ENCODE measurements at regions of chr6 and their contacts with region 1.

Region 1: GRCh38 chr6:81003156-81003555 is 749.3 kb downstream of the TENT5A start:
- DNase-seq: peak; percentile 10
- ATAC-seq: peak; percentile 51
- H3K4me3 ChIP-seq: no peak overlapping the region
- H3K27ac ChIP-seq: no peak overlapping the region
- H3K4me1 ChIP-seq: no peaks in the 10 kb centered on the region
- H3K27me3 ChIP-seq: no peaks in the 10 kb centered on the region
- CTCF ChIP-seq: no peak

Region 2: GRCh38 chr6:80742481-80742880 is 260.7 kb before region 1 on chr6:
- CTCF ChIA-PET with region 1: no interaction called
- POLR2A ChIA-PET with region 1: no interaction called
- intact Hi-C with region 1: no loop called
- DNase-seq: peak; percentile 45
- ATAC-seq: peak; percentile 49
- H3K4me3 ChIP-seq: no peak overlapping the region
- H3K27ac ChIP-seq: no peak overlapping the region
- H3K4me1 ChIP-seq: no peaks in the 10 kb centered on the region
- H3K27me3 ChIP-seq: no peaks in the 10 kb centered on the region
- CTCF ChIP-seq: peak; percentile 56

Region 3: DNA sequence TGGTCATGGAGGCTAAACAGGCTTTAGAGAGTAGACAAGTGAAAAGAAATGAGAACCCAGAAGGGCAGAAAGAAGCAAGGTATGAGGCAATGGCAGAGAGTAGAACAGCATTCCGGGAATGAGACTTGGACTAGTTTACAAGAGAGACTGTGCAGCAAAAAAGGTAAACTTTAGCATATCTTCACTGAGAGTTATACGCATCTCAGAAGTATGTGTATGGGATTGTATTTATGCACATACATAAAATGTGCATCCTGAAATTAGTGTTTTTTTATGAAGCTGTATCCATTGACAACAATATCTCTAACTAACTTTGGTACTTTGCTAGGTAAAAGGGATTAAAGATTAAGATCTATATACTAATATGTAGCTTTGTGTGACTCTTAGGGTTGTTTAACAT is 143.0 kb before region 1 on chr6:
- CTCF ChIA-PET with region 1: no interaction called
- POLR2A ChIA-PET with region 1: interaction called, 12 read pairs
- intact Hi-C with region 1: no loop called
- DNase-seq: no peak
- ATAC-seq: no peak
- H3K4me3 ChIP-seq: no peak overlapping the region
- H3K27ac ChIP-seq: no peak overlapping the region
- H3K4me1 ChIP-seq: no peaks in the 10 kb centered on the region
- H3K27me3 ChIP-seq: no peaks in the 10 kb centered on the region
- CTCF ChIP-seq: no peak